Naive thymus-derived CD4-positive, alpha-beta T cell (primary cell): ENCODE measurements at regions of chr5 and their contacts with region 1.

Region 1: GRCh38 chr5:36241631-36242533 is at the start of gene NADK2:
- DNase-seq: peak; percentile 88 to 96 (median 93)
- ATAC-seq: peak; percentile 92
- H3K4me3 ChIP-seq: peak within 1 kb of the TSS; percentile 78
- H3K4me3 Mint-ChIP-seq: peak within 1 kb of the TSS; percentile 84 to 95 (median 92)
- H3K27ac ChIP-seq: peak within 1 kb of the TSS; percentile 97
- H3K27ac Mint-ChIP-seq: peak within 1 kb of the TSS; percentile 94 to 97 (median 95)
- H3K4me1 ChIP-seq: peaks cover 12 to 14% of the 10 kb centered on the region in 2 donors
- H3K4me1 Mint-ChIP-seq: peaks cover 24 to 64% (median 52%) of the 10 kb centered on the region in 7 donors
- H3K27me3 ChIP-seq: no peaks in the 10 kb centered on the region
- H3K27me3 Mint-ChIP-seq: peaks cover 0 to 5% (median 0%) of the 10 kb centered on the region in 5 donors
- total RNA-seq, gene NADK2: 11.3 to 17.8 (median 13.0) TPM

Region 2: GRCh38 chr5:34838785-34839714 is 1402.8 kb before region 1 on chr5 and contains the start of gene TTC23L:
- CTCF ChIA-PET with region 1: no interaction called
- POLR2A ChIA-PET with region 1: interaction called, 3 read pairs
- intact Hi-C with region 1: loop called (anchors 2 to 5 kb)
- DNase-seq: peak; percentile 82 to 95 (median 90)
- ATAC-seq: peak; percentile 94
- H3K4me3 ChIP-seq: peak within 1 kb of the TSS; percentile 85
- H3K4me3 Mint-ChIP-seq: peak within 1 kb of the TSS; percentile 79 to 97 (median 92)
- H3K27ac ChIP-seq: peak within 1 kb of the TSS; percentile 78
- H3K27ac Mint-ChIP-seq: peak within 1 kb of the TSS; percentile 83 to 99 (median 94)
- H3K4me1 ChIP-seq: peaks cover 0 to 4% of the 10 kb centered on the region in 2 donors
- H3K4me1 Mint-ChIP-seq: peaks cover 6 to 16% (median 10%) of the 10 kb centered on the region in 7 donors
- H3K27me3 ChIP-seq: no peaks in the 10 kb centered on the region
- H3K27me3 Mint-ChIP-seq: peaks cover 0 to 9% (median 0%) of the 10 kb centered on the region in 5 donors
- total RNA-seq, gene TTC23L: 0.57 to 1.9 (median 1.00) TPM in 3 of 5 experiments, not detected in the others

Region 3: DNA sequence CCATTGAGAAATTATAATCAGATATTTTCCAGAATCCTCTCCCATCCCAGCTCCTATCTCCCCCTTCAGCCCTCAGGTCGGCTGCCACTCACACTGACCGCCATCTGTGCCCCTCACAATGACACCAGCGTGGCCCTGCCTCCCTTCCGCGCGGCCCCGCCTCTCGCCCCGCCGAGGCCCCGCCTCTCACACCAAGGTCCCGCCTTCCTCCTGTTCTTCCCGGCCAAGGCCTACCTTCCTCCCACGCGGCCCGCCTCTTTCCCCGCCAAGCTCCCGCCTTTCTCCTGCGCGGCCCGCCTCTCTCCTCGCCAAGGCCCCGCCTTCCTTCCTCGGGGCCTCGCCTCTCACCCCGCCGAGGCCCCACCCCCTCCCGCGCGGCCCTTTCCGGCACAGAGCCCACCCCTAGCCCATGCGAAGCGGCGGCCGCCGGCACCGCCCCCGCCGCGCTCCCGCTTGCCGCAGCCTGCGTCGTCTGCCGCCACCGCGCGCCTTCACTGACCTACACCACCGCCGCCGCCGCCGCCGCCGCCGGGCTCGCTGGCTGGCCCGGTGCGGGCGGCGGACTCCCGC is 1312.6 kb before region 1 on chr5 and contains the start of gene DNAJC21:
- CTCF ChIA-PET with region 1: no interaction called
- POLR2A ChIA-PET with region 1: interaction called, 4 read pairs
- intact Hi-C with region 1: loop called (anchors 1 kb)
- DNase-seq: peak; percentile 93 to 99 (median 97)
- ATAC-seq: peak; percentile 93
- H3K4me3 ChIP-seq: peak within 1 kb of the TSS; percentile 75
- H3K4me3 Mint-ChIP-seq: peak within 1 kb of the TSS; percentile 94 to 99 (median 96)
- H3K27ac ChIP-seq: peak within 1 kb of the TSS; percentile 93
- H3K27ac Mint-ChIP-seq: peak within 1 kb of the TSS; percentile 86 to 98 (median 94)
- H3K4me1 ChIP-seq: peaks cover 15 to 18% of the 10 kb centered on the region in 2 donors
- H3K4me1 Mint-ChIP-seq: peaks cover 19 to 44% (median 36%) of the 10 kb centered on the region in 7 donors
- H3K27me3 ChIP-seq: no peaks in the 10 kb centered on the region
- H3K27me3 Mint-ChIP-seq: no peaks in the 10 kb centered on the region
- total RNA-seq, gene DNAJC21: 43.9 to 66.4 (median 49.6) TPM

Region 4: DNA sequence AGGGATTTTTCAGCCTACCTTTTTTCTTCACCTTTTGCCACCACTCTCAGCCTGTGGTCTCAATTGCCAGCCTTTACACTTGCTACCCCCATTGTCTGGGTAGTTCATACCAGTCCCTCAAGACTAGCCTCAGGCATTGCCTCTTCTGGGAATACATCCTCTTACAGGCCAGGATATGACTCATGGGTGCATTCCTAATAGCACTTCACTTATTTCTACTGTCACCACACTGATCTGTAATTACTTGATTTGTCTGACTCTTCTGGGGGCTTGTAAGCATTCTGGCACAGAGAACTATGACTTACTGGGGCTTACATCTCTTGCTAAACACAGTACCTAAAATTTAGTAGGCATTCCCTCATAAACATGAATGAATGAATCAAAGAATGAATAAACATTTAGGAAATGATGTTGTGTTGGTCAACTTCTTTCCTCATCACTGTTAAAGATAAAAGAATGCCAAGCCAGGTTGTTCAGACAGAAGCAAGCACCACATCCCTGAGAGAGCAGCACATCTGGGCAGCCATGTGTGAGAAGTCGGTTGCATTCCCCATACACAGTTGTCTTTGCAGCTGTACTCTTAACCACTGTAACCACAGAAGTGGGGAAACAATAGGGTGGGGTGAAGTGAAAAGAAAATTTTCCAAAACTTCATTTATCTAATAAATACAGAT is 357.6 kb before region 1 on chr5:
- CTCF ChIA-PET with region 1: no interaction called
- POLR2A ChIA-PET with region 1: no interaction called
- intact Hi-C with region 1: loop called in 1 of 2 experiments (anchors 10 kb)
- DNase-seq: no peak
- ATAC-seq: peak; percentile 57
- H3K4me3 ChIP-seq: no peak overlapping the region
- H3K4me3 Mint-ChIP-seq: peak overlapping the region in 8 of 10 donors; percentile 2 to 62 (median 18)
- H3K27ac ChIP-seq: no peak overlapping the region
- H3K27ac Mint-ChIP-seq: peak overlapping the region in 8 of 9 donors; percentile 5 to 90 (median 68)
- H3K4me1 ChIP-seq: peaks cover 10 to 25% of the 10 kb centered on the region in 2 donors
- H3K4me1 Mint-ChIP-seq: peaks cover 37 to 56% (median 51%) of the 10 kb centered on the region in 7 donors
- H3K27me3 ChIP-seq: no peaks in the 10 kb centered on the region
- H3K27me3 Mint-ChIP-seq: no peaks in the 10 kb centered on the region

Region 5: DNA sequence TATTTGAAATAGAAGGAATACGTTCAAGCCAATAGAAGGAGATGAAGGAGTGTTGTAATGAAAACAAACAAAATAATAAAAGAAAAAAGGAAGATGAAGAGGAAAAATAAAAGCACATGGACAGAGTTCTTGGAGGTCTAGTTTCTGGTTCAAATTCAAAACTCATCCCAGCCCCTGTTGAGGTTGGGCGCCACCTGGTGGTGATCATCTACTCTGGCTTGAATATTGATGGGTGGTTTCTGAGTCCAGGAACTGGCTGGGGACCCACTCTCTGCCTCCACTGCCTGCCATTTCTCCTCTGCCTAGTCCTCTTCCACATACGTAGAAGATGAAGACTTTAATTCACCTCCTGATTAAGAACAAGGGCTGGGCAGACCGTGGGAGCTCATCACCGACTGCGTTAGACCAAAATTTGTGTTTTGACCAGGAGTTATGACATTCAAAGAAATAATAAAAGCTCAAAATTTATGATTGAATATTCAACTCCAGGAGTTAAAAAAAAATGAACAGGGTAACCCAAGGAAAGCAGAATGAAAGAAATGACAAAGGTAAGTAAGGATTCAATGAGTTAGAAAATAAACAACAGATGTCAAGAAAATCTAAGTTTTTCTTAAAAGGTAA is 265.6 kb after region 1 on chr5:
- CTCF ChIA-PET with region 1: no interaction called
- POLR2A ChIA-PET with region 1: no interaction called
- intact Hi-C with region 1: loop called in 1 of 2 experiments (anchors 1 kb)
- DNase-seq: peak; percentile 28 to 69 (median 50)
- ATAC-seq: peak; percentile 70
- H3K4me3 ChIP-seq: no peak overlapping the region
- H3K4me3 Mint-ChIP-seq: no peak overlapping the region
- H3K27ac ChIP-seq: no peak overlapping the region
- H3K27ac Mint-ChIP-seq: no peak overlapping the region
- H3K4me1 ChIP-seq: no peaks in the 10 kb centered on the region
- H3K4me1 Mint-ChIP-seq: peaks cover 0 to 3% (median 0%) of the 10 kb centered on the region in 7 donors
- H3K27me3 ChIP-seq: no peaks in the 10 kb centered on the region
- H3K27me3 Mint-ChIP-seq: peaks cover 10 to 34% (median 20%) of the 10 kb centered on the region in 5 donors